Aorta (tissue), 5 donors: ENCODE measurements at regions of chr6 and their contacts with region 1.

Region 1: DNA sequence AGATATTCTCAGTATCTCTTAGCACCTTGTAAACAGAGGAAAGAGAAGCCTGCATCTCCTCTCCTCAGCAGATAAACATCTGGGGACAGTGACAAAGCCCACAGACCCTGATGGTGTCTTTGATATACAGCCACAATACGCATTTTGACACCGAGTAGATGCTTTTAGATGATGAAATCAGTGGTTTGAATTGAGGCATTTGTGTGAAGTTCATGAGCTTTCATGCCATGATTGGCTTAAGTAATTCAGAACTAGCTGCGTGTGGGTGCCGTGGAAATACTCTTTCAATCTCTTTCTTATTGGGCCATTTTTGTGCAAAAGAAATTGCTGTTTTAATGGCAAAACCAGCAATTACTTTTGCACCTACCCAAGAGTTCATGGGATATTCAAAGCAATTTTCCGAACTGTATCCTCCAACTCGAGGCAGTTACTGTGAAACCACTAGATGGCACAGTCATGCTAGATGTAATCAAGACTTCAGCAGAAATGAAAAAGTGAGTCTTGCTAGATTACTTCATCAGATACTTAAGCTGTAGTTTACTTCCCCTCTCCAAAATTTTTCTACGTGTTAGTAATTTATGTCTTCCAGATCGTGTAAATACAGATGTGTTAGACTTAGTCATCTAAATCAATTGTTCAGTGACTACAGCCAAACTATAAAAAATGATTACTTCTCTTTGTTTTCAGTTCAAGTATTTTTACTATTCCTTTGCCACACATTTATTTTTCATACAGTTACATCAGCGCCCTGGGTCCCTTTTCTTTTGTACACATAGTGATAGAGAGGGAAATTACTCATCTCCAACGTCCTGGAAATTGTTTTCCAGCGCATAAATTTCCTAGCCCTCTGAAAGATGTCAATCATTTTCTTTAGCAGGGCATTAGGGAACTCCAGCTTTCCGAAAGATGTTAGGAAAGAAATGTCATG is 49.4 kb downstream of the IYD start:
- DNase-seq: no peak
- ATAC-seq: peak; percentile 90
- H3K4me3 ChIP-seq: peak overlapping the region; percentile 51 to 60
- H3K27ac ChIP-seq: no peak overlapping the region
- H3K4me1 ChIP-seq: no peaks in the 10 kb centered on the region
- H3K27me3 ChIP-seq: no peaks in the 10 kb centered on the region

Region 2: GRCh38 chr6:150600301-150601017 is 182.3 kb after region 1 on chr6:
- intact Hi-C with region 1: loop called in 1 of 2 experiments (anchors 10 kb)
- DNase-seq: peak; percentile 73 to 86
- ATAC-seq: peak; percentile 81
- H3K4me3 ChIP-seq: peak overlapping the region; percentile 60 to 61
- H3K27ac ChIP-seq: no peak overlapping the region
- H3K4me1 ChIP-seq: no peaks in the 10 kb centered on the region
- H3K27me3 ChIP-seq: no peaks in the 10 kb centered on the region

Region 3: GRCh38 chr6:150741633-150742504 is 323.7 kb after region 1 on chr6:
- intact Hi-C with region 1: loop called in 1 of 2 experiments (anchors 5 kb)
- DNase-seq: no peak
- ATAC-seq: no peak
- H3K4me3 ChIP-seq: no peak overlapping the region
- H3K27ac ChIP-seq: no peak overlapping the region
- H3K4me1 ChIP-seq: no peaks in the 10 kb centered on the region
- H3K27me3 ChIP-seq: no peaks in the 10 kb centered on the region